OCI-LY7 (cell line): ENCODE measurements at regions of chr19 and their contacts with region 1.

Region 1: GRCh38 chr19:11380653-11381534 is 3.2 kb downstream of the EPOR start:
- DNase-seq: peak; percentile 99
- H3K4me3 ChIP-seq: peak overlapping the region; percentile 75
- H3K27ac ChIP-seq: peak overlapping the region; percentile 92
- H3K4me1 ChIP-seq: peaks cover 63% of the 10 kb centered on the region
- CTCF ChIP-seq: peak; percentile 90

Region 2: GRCh38 chr19:11422163-11423021 is 41.5 kb after region 1 on chr19:
- CTCF ChIA-PET with region 1: interaction called, 5 read pairs
- POLR2A ChIA-PET with region 1: interaction called, 7 read pairs
- intact Hi-C with region 1: loop called (anchors 1 kb)
- DNase-seq: peak; percentile 95
- H3K4me3 ChIP-seq: peak overlapping the region; percentile 63
- H3K27ac ChIP-seq: peak overlapping the region; percentile 9
- H3K4me1 ChIP-seq: peaks cover 38% of the 10 kb centered on the region
- CTCF ChIP-seq: no peak

Region 3: GRCh38 chr19:11435058-11435832 is 54.4 kb after region 1 on chr19 and contains the starts of genes ODAD3 and PRKCSH:
- CTCF ChIA-PET with region 1: interaction called, 3 read pairs
- POLR2A ChIA-PET with region 1: interaction called, 3 read pairs
- intact Hi-C with region 1: loop called (anchors 1 kb)
- DNase-seq: peak; percentile 99
- H3K4me3 ChIP-seq: peak within 1 kb of the TSS; percentile 92
- H3K27ac ChIP-seq: peak within 1 kb of the TSS; percentile 33
- H3K4me1 ChIP-seq: peaks cover 24% of the 10 kb centered on the region
- CTCF ChIP-seq: peak; percentile 82
- total RNA-seq, gene ODAD3: 0.28 and 0.57 TPM in 2 replicates
- total RNA-seq, gene PRKCSH: 61.8 and 95.6 TPM in 2 replicates

Region 4: DNA sequence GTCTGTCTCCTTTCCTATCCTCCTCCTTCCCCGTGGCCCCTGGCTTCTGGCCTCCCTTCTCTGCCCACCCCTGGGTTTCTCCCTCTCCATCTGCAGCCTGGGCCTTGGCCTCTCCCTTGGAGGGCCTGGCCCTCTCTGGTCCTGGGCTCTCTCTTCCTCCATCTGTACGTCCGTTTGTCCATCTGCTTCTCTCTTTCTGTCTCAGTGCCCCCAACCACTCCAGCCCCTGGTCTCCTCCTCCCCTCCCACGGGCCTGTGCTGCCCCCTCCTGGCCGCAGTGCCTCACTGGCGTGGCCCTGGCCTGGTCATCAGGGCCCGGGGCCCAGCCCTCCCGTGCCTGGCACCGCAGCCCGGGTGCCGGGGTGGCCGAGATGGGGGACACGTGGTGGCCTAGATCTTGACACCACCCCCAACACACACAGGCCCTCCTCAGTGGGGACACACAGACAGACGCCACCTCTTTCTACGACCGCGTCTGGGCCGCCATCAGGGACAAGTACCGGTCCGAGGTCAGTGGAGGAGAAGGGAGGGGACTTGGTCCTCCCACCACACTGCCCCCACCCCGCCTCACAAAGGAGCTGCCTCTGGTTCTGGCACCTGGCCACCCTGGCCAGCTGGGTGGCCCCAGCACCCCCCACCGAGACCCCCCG is 65.9 kb after region 1 on chr19:
- CTCF ChIA-PET with region 1: no interaction called
- POLR2A ChIA-PET with region 1: interaction called, 6 read pairs
- intact Hi-C with region 1: loop called (anchors 2 kb)
- DNase-seq: peak; percentile 59
- H3K4me3 ChIP-seq: no peak overlapping the region
- H3K27ac ChIP-seq: no peak overlapping the region
- H3K4me1 ChIP-seq: peaks cover 5% of the 10 kb centered on the region
- CTCF ChIP-seq: peak; percentile 84

Region 5: GRCh38 chr19:11482384-11483050 is 101.6 kb after region 1 on chr19:
- CTCF ChIA-PET with region 1: interaction called, 11 read pairs
- POLR2A ChIA-PET with region 1: interaction called, 8 read pairs
- intact Hi-C with region 1: loop called (anchors 1 kb)
- DNase-seq: peak; percentile 95
- H3K4me3 ChIP-seq: peak overlapping the region; percentile 65
- H3K27ac ChIP-seq: peak overlapping the region; percentile 65
- H3K4me1 ChIP-seq: peaks cover 23% of the 10 kb centered on the region
- CTCF ChIP-seq: peak; percentile 89